Left ventricle myocardium superior (tissue), 1 donor: ENCODE measurements at regions of chr3 and their contacts with region 1.

Region 1: DNA sequence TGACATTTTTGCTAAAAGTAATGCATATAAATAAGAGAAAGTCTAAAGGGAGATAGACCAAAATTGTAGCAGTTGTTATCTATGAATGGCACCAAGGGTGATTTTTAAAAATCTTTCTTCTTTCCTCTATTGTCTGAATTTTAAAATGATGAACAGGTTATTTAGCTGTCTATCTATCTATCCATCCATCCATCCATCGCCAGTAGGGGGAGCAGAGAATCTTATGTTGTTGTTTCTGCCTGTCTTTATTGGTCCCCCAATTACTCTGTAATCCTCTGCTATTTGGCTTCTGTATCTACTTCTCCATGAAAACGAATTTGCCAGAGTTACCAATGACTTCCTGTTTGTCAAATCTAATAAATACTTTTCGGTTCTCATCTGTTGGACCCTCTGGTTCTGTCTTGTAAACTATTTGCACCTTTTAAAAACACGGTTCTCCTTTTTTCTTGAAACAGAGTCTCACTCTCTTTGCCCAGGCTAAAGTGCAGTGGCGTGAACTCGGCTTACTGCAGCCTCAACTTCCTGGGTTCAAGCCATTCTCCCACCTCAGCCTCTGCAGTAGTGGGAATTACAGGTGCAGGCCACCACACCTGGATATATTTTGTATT is 86.0 kb downstream of the ECT2 start:
- DNase-seq: no peak
- ATAC-seq: peak; percentile 67

Region 2: DNA sequence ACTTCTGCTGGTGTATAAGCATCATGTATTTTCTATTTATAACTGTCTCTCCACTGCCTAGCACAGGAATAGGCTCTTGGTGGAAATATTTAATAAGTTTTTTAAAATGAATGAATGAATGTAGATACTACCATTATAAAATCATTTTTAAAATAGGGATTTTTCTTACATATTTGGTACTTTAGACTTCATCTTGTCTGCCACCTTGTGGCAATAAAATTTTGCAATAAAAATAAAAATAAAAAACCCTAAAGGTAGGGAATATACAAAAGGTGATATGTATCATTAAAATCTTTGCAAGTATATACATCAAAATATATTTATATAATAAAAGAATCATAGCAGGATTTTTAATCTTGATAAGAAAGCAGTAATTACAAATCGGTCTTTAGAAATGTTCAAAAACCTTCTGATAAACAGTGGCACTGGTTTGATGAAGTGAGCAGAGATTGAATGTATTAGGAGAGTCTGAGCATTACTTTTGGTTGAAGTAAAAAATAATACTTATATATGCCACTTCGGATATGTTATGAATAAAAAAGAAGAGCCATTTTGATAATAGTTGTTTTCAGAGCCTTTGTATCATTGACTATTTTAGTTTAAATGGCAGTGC is 209.4 kb after region 1 on chr3:
- intact Hi-C with region 1: loop called (anchors 10 kb)
- DNase-seq: no peak
- ATAC-seq: peak; percentile 21

Region 3: DNA sequence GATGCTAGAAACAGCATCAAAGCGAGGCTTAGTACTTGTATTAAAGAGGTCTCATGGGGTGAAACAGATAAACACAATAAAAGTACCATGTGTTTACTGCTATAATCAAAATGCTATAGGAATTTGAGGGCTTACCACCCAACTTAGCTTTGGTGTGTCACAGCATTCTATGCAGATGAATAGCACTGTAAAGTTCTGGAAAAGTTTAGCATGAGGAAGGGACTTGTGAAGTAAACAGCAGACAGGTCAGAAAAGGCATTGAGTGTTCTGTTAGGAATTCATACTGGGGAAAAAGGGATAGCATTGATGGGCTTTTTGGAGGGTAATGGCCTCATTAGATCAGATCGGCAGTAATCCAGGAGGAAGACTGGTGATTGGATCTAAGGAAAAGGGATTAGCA is 1066.4 kb after region 1 on chr3:
- intact Hi-C with region 1: no loop called
- DNase-seq: no peak
- ATAC-seq: no peak